ENCODE measurements at regions of chr20 and their contacts with region 1.

Region 1: GRCh38 chr20:5181956-5182355 is 55.1 kb downstream of the CDS2 start:
- DNase-seq: no peak

Region 2: GRCh38 chr20:4820806-4821518 is 361.0 kb before region 1 on chr20:
- in situ Hi-C with region 1: no loop called
- DNase-seq: no peak

Region 3: GRCh38 chr20:5135363-5136012 is 46.5 kb before region 1 on chr20:
- in situ Hi-C with region 1: loop called (anchors 10 kb)
- DNase-seq: no peak